CD4-positive, alpha-beta T cell (primary cell): ENCODE measurements at regions of chr6 and their contacts with region 1.

Region 1: DNA sequence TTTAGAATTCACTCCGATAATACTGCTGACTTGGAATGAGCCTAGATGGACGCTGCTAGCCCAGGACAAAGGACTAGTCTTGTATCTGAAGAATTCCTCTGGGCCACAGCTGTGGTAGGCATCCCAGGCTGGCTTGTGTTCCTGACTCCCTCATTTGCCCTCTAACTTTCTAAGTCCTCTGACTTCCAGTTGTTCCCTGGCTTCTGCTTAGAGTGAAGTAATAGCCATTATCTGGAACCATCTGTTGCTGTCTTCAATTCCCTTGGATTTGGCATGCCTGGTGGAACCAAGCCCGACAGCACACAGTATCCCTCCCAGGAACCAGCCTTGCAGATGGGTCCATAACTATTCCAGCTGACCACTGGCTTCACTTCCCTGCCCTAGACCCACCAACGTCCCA is 376.0 kb downstream of the SYNE1 start:
- DNase-seq: no peak
- ATAC-seq: no peak
- H3K4me3 ChIP-seq: no peak overlapping the region
- H3K4me3 Mint-ChIP-seq: no peak overlapping the region
- H3K27ac ChIP-seq: no peak overlapping the region
- H3K27ac Mint-ChIP-seq: no peak overlapping the region
- H3K4me1 ChIP-seq: no peaks in the 10 kb centered on the region
- H3K4me1 Mint-ChIP-seq: no peaks in the 10 kb centered on the region
- H3K27me3 ChIP-seq: no peaks in the 10 kb centered on the region
- H3K27me3 Mint-ChIP-seq: no peaks in the 10 kb centered on the region
- CTCF ChIP-seq: no peak

Region 2: GRCh38 chr6:152220786-152221185 is 40.4 kb before region 1 on chr6:
- CTCF ChIA-PET with region 1: no interaction called
- POLR2A ChIA-PET with region 1: interaction called, 4 read pairs
- intact Hi-C with region 1: loop called in 1 of 2 experiments (anchors 5 kb)
- DNase-seq: no peak
- ATAC-seq: no peak
- H3K4me3 ChIP-seq: no peak overlapping the region
- H3K4me3 Mint-ChIP-seq: no peak overlapping the region
- H3K27ac ChIP-seq: no peak overlapping the region
- H3K27ac Mint-ChIP-seq: no peak overlapping the region
- H3K4me1 ChIP-seq: no peaks in the 10 kb centered on the region
- H3K4me1 Mint-ChIP-seq: no peaks in the 10 kb centered on the region
- H3K27me3 ChIP-seq: no peaks in the 10 kb centered on the region
- H3K27me3 Mint-ChIP-seq: no peaks in the 10 kb centered on the region
- CTCF ChIP-seq: no peak

Region 3: DNA sequence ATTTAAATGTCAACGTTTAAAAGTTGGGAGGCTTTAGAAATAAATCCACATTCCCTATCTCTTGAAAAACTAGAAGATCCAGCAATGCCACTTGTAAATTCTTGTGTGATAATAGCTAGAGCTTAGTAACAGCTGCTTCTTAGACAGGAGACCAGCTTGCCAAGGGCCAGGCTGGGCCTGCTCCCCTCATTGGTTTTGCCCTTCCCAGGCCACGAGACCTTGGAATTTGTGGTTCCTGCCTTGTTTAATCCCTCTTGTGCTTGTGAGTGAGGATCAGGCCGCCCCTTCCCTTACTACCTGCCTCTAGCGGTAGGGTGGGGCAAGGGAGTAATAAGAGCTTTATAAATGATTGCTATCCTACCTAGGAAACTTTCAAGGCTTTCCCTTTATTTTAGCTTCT is 12.5 kb after region 1 on chr6:
- CTCF ChIA-PET with region 1: no interaction called
- POLR2A ChIA-PET with region 1: no interaction called
- intact Hi-C with region 1: loop called in 1 of 2 experiments (anchors 2 kb)
- DNase-seq: no peak
- ATAC-seq: no peak
- H3K4me3 ChIP-seq: no peak overlapping the region
- H3K4me3 Mint-ChIP-seq: no peak overlapping the region
- H3K27ac ChIP-seq: no peak overlapping the region
- H3K27ac Mint-ChIP-seq: peak overlapping the region; percentile 2
- H3K4me1 ChIP-seq: no peaks in the 10 kb centered on the region
- H3K4me1 Mint-ChIP-seq: no peaks in the 10 kb centered on the region
- H3K27me3 ChIP-seq: no peaks in the 10 kb centered on the region
- H3K27me3 Mint-ChIP-seq: no peaks in the 10 kb centered on the region
- CTCF ChIP-seq: no peak